Heart left ventricle (tissue), 16 donors: ENCODE measurements at regions of chr2 and their contacts with region 1.

Region 1: DNA sequence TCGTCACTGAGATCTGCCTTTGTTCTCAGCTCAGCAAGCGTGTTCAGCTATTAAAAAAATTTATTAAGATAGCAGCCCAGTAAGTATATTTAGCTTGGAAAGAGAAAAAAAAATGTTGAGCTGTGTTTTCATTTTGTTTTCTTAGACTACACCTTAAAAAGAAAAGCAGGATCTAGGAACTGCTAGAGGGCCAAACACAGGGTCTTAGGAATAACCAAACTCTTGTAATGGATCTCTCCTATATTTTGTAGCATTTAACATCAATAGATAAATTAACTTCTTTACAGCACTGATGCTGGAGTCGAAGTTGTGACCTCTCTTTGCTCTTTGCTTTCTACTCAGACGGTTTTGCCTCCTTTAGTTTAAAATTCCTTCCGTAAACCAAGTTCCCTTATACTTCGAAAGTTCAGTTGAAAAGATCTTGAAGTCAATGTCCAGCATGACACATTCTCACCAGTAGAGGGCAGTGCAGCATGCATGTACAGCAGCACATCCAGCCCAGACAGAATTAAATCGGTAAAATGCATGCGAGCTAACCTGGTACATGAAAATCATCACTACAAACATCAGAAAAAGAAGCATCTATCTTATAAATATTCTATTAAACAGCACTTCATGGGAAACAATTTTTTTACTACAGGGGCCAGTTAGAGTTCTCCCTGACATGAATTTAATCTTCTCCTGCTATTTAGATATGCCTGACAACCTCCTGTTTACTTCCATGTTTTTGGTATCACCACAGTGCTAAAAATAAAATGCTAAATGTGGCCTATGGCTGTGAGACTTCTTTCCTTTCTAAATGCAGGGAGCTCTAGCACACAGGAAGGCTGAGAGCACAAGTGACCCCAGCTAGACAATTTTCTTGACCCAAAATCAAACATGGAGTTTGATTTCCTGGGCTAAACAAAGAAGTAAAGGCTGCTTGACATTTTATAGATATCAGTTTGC is 48.2 kb upstream of the MAP3K20 start:
- DNase-seq: peak in 4 of 5 donors; percentile 79 to 89 (median 86)
- ATAC-seq: peak; percentile 77 to 88 (median 82)
- H3K4me3 ChIP-seq: peak overlapping the region in 1 of 12 donors; percentile 7
- H3K27ac ChIP-seq: peak overlapping the region; percentile 68 to 93 (median 86)
- H3K4me1 ChIP-seq: peaks cover 0 to 41% (median 25%) of the 10 kb centered on the region in 12 donors
- H3K27me3 ChIP-seq: no peaks in the 10 kb centered on the region
- CTCF ChIP-seq: peak; percentile 91 to 98 (median 96)
- POLR2A ChIP-seq: no peak

Region 2: DNA sequence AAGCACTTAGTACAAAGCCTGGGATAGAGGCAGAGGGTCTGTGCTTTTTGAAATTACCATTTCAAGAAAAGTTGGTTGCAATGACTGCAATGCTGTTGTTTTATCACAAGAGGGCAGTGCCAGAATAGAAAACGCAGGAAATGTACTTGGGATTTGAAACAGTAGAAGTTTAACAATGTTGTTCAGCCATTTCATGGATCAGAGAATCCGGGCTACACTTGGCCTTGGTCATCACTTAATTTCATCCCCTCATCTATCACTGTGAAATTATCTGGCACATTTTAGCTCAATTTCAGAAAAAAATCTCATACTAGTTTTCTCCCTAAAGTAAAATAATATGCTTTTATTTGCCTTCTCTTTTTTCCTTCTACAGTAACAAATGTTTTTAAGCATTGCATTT is 221.0 kb before region 1 on chr2:
- intact Hi-C with region 1: loop called in 3 of 10 experiments (anchors 5 to 10 kb)
- DNase-seq: no peak
- ATAC-seq: peak in 2 of 4 donors; percentile 34 to 47
- H3K4me3 ChIP-seq: no peak overlapping the region
- H3K27ac ChIP-seq: no peak overlapping the region
- H3K4me1 ChIP-seq: peaks cover 0 to 6% (median 0%) of the 10 kb centered on the region in 12 donors
- H3K27me3 ChIP-seq: no peaks in the 10 kb centered on the region
- CTCF ChIP-seq: peak; percentile 77 to 94 (median 88)
- POLR2A ChIP-seq: no peak

Region 3: GRCh38 chr2:172972005-172972619 is 55.3 kb before region 1 on chr2:
- intact Hi-C with region 1: loop called in 4 of 10 experiments (anchors 5 to 10 kb)
- DNase-seq: peak in 3 of 5 donors; percentile 30 to 49 (median 42)
- ATAC-seq: peak in 2 of 4 donors; percentile 35 to 56
- H3K4me3 ChIP-seq: no peak overlapping the region
- H3K27ac ChIP-seq: no peak overlapping the region
- H3K4me1 ChIP-seq: peaks cover 0 to 43% (median 23%) of the 10 kb centered on the region in 12 donors
- H3K27me3 ChIP-seq: no peaks in the 10 kb centered on the region
- CTCF ChIP-seq: peak; percentile 56 to 88 (median 74)
- POLR2A ChIP-seq: no peak

Region 4: GRCh38 chr2:173075781-173076580 is 48.5 kb after region 1 on chr2 and contains the start of gene MAP3K20:
- intact Hi-C with region 1: loop called in 8 of 10 experiments (anchors 2 to 5 kb)
- DNase-seq: peak; percentile 81 to 91 (median 88)
- ATAC-seq: peak; percentile 67 to 89 (median 86)
- H3K4me3 ChIP-seq: peak within 1 kb of the TSS; percentile 64 to 85 (median 78)
- H3K27ac ChIP-seq: peak within 1 kb of the TSS; percentile 90 to 98 (median 96)
- H3K4me1 ChIP-seq: peaks cover 0 to 47% (median 18%) of the 10 kb centered on the region in 12 donors
- H3K27me3 ChIP-seq: no peaks in the 10 kb centered on the region
- CTCF ChIP-seq: peak in 11 of 12 donors; percentile 11 to 71 (median 54)
- POLR2A ChIP-seq: peak in 1 of 2 donors; percentile 71
- total RNA-seq, gene MAP3K20: 275 to 487 (median 451) TPM

Region 5: GRCh38 chr2:173354601-173355131 is 327.2 kb after region 1 on chr2 and contains the start of gene CDCA7:
- intact Hi-C with region 1: loop called in 2 of 10 experiments (anchors 5 to 10 kb)
- DNase-seq: peak; percentile 21 to 76 (median 56)
- ATAC-seq: peak; percentile 55 to 94 (median 88)
- H3K4me3 ChIP-seq: peak within 1 kb of the TSS; percentile 46 to 85 (median 62)
- H3K27ac ChIP-seq: peak within 1 kb of the TSS in 9 of 12 donors; percentile 32 to 72 (median 57)
- H3K4me1 ChIP-seq: peaks cover 0 to 25% (median 5%) of the 10 kb centered on the region in 12 donors
- H3K27me3 ChIP-seq: peaks cover 0 to 59% (median 26%) of the 10 kb centered on the region in 9 donors
- CTCF ChIP-seq: peak in 2 of 12 donors; percentile 11 to 14
- POLR2A ChIP-seq: no peak
- total RNA-seq, gene CDCA7: 0.12 to 3.7 (median 1.1) TPM